ENCODE measurements at regions of chr11 and their contacts with region 1.

Region 1: DNA sequence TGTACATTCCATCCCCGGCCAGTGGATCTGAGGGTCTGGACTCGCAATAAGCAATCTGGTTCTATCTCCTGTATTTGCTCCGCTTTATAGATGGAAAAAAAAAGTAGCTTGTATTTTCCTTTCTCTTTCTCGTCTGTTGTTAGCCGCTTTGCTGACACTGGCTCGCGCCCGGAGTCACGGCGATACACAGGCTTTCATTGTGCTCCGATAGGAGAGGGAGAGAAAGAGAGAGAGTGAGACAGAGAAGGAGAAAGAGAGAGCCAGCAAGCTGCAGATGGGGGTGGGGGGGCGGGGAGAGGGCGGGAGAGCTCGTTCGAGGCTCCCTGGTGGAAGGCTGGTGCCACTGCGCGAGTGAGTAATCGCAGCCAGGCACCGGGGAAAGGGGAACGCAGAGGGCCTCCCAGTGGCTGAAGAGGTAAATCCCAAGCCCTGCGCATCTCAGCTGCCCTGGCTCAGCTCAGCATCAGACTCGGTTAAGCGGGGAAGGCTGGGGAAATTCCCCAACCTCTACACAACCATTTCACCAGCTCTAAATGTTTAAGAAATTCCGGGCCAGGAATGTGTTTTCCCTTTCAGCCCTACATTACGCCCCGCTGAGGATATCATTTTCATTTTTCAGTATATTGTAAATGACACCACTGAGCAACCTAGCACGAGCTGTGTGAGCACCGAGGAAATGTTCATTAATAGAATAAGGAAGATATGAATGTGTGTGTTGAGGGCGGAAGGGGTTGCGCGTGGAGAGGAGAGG is at the start of gene MAML2:
- DNase-seq: peak; percentile 87 to 97 (median 96)
- ATAC-seq: peak; percentile 92
- H3K4me3 ChIP-seq: peak within 1 kb of the TSS; percentile 60 to 70
- H3K27ac ChIP-seq: peak within 1 kb of the TSS; percentile 85 to 88
- H3K4me1 ChIP-seq: peaks cover 18 to 46% of the 10 kb centered on the region in 2 donors
- H3K27me3 ChIP-seq: no peaks in the 10 kb centered on the region
- CTCF ChIP-seq: peak; percentile 94 to 98
- polyA plus RNA-seq, gene MAML2: 33.6 to 44.0 (median 39.5) TPM

Region 2: GRCh38 chr11:96054870-96055705 is 288.0 kb before region 1 on chr11:
- intact Hi-C with region 1: loop called in 1 of 2 experiments (anchors 10 kb)
- DNase-seq: no peak
- ATAC-seq: peak; percentile 73
- H3K4me3 ChIP-seq: no peak overlapping the region
- H3K27ac ChIP-seq: peak overlapping the region; percentile 23 to 34
- H3K4me1 ChIP-seq: peaks cover 14 to 16% of the 10 kb centered on the region in 2 donors
- H3K27me3 ChIP-seq: no peaks in the 10 kb centered on the region
- CTCF ChIP-seq: peak; percentile 42 to 68

Region 3: GRCh38 chr11:96447208-96448110 is 104.3 kb after region 1 on chr11:
- intact Hi-C with region 1: no loop called
- DNase-seq: no peak
- ATAC-seq: no peak
- H3K4me3 ChIP-seq: no peak overlapping the region
- H3K27ac ChIP-seq: no peak overlapping the region
- H3K4me1 ChIP-seq: no peaks in the 10 kb centered on the region
- H3K27me3 ChIP-seq: peaks cover 0 to 12% of the 10 kb centered on the region in 2 donors
- CTCF ChIP-seq: no peak